ENCODE measurements at regions of chr11 and their contacts with region 1.

Region 1: GRCh38 chr11:101860696-101861427 is 53.9 kb upstream of the CEP126 start:
- DNase-seq: peak; percentile 36
- H3K4me3 ChIP-seq: no peak overlapping the region
- H3K27ac ChIP-seq: no peak overlapping the region
- H3K4me1 ChIP-seq: peaks cover 13% of the 10 kb centered on the region
- H3K27me3 ChIP-seq: no peaks in the 10 kb centered on the region
- CTCF ChIP-seq: peak; percentile 82 to 84

Region 2: GRCh38 chr11:101617735-101618332 is 243.0 kb before region 1 on chr11:
- CTCF ChIA-PET with region 1: interaction called, 27 read pairs
- dilution Hi-C with region 1: no loop called
- in situ Hi-C with region 1: no loop called
- intact Hi-C with region 1: no loop called
- DNase-seq: peak; percentile 85
- H3K4me3 ChIP-seq: no peak overlapping the region
- H3K27ac ChIP-seq: peak overlapping the region; percentile 92
- H3K4me1 ChIP-seq: peaks cover 22% of the 10 kb centered on the region
- H3K27me3 ChIP-seq: no peaks in the 10 kb centered on the region
- CTCF ChIP-seq: no peak

Region 3: GRCh38 chr11:101765945-101766344 is 94.9 kb before region 1 on chr11:
- CTCF ChIA-PET with region 1: no interaction called
- dilution Hi-C with region 1: no loop called
- in situ Hi-C with region 1: no loop called
- intact Hi-C with region 1: no loop called
- DNase-seq: no peak
- H3K4me3 ChIP-seq: no peak overlapping the region
- H3K27ac ChIP-seq: no peak overlapping the region
- H3K4me1 ChIP-seq: no peaks in the 10 kb centered on the region
- H3K27me3 ChIP-seq: no peaks in the 10 kb centered on the region
- CTCF ChIP-seq: no peak

Region 4: GRCh38 chr11:101848262-101848661 is 12.6 kb before region 1 on chr11:
- CTCF ChIA-PET with region 1: no interaction called
- dilution Hi-C with region 1: no loop called
- in situ Hi-C with region 1: no loop called
- intact Hi-C with region 1: no loop called
- DNase-seq: no peak
- H3K4me3 ChIP-seq: no peak overlapping the region
- H3K27ac ChIP-seq: no peak overlapping the region
- H3K4me1 ChIP-seq: no peaks in the 10 kb centered on the region
- H3K27me3 ChIP-seq: no peaks in the 10 kb centered on the region
- CTCF ChIP-seq: peak; percentile 13 to 32

Region 5: GRCh38 chr11:101880222-101880621 is 19.4 kb after region 1 on chr11:
- CTCF ChIA-PET with region 1: interaction called, 11 read pairs
- dilution Hi-C with region 1: no loop called
- in situ Hi-C with region 1: no loop called
- intact Hi-C with region 1: loop called (anchors 1 kb)
- DNase-seq: peak; percentile 33
- H3K4me3 ChIP-seq: no peak overlapping the region
- H3K27ac ChIP-seq: no peak overlapping the region
- H3K4me1 ChIP-seq: no peaks in the 10 kb centered on the region
- H3K27me3 ChIP-seq: no peaks in the 10 kb centered on the region
- CTCF ChIP-seq: peak; percentile 53 to 61

Region 6: GRCh38 chr11:101914738-101915426 is 54.0 kb after region 1 on chr11 and contains the start of gene CEP126:
- CTCF ChIA-PET with region 1: interaction called, 5 read pairs
- dilution Hi-C with region 1: no loop called
- in situ Hi-C with region 1: no loop called
- intact Hi-C with region 1: loop called (anchors 5 kb)
- DNase-seq: peak; percentile 92
- H3K4me3 ChIP-seq: peak within 1 kb of the TSS; percentile 75 to 84 (median 82)
- H3K27ac ChIP-seq: peak within 1 kb of the TSS; percentile 93
- H3K4me1 ChIP-seq: peaks cover 12% of the 10 kb centered on the region
- H3K27me3 ChIP-seq: no peaks in the 10 kb centered on the region
- CTCF ChIP-seq: peak; percentile 20 to 59
- total RNA-seq, gene CEP126: 2.2 to 2.8 TPM

Region 7: GRCh38 chr11:102268329-102269193 is 407.7 kb after region 1 on chr11:
- CTCF ChIA-PET with region 1: no interaction called
- dilution Hi-C with region 1: no loop called
- in situ Hi-C with region 1: no loop called
- intact Hi-C with region 1: loop called (anchors 2 kb)
- DNase-seq: peak; percentile 95
- H3K4me3 ChIP-seq: peak overlapping the region; percentile 32 to 56 (median 51)
- H3K27ac ChIP-seq: peak overlapping the region; percentile 90
- H3K4me1 ChIP-seq: peaks cover 36% of the 10 kb centered on the region
- H3K27me3 ChIP-seq: no peaks in the 10 kb centered on the region
- CTCF ChIP-seq: peak; percentile 66 to 78

Region 8: DNA sequence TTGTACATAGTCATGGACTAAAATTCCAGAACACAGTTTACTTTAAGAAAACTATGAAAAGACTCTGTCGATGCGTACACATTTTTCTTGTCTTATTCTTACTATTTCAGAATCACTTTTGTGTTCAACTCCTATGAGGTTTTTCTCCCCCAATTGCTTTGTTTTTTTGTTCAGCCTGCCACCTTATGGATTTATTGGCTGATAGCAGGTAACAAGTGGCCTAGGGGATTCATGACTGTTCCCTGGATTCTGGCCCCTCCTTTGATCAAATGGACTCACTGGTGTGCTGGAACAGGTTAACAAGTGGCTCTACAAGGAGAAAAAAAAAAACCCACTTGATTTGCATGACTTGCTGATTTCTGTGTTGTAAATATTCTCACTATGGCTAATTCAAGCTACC is 753.6 kb after region 1 on chr11:
- CTCF ChIA-PET with region 1: no interaction called
- dilution Hi-C with region 1: no loop called
- in situ Hi-C with region 1: no loop called
- intact Hi-C with region 1: loop called (anchors 2 kb)
- DNase-seq: no peak
- H3K4me3 ChIP-seq: no peak overlapping the region
- H3K27ac ChIP-seq: no peak overlapping the region
- H3K4me1 ChIP-seq: no peaks in the 10 kb centered on the region
- H3K27me3 ChIP-seq: no peaks in the 10 kb centered on the region
- CTCF ChIP-seq: peak; percentile 5 to 34

Region 9: DNA sequence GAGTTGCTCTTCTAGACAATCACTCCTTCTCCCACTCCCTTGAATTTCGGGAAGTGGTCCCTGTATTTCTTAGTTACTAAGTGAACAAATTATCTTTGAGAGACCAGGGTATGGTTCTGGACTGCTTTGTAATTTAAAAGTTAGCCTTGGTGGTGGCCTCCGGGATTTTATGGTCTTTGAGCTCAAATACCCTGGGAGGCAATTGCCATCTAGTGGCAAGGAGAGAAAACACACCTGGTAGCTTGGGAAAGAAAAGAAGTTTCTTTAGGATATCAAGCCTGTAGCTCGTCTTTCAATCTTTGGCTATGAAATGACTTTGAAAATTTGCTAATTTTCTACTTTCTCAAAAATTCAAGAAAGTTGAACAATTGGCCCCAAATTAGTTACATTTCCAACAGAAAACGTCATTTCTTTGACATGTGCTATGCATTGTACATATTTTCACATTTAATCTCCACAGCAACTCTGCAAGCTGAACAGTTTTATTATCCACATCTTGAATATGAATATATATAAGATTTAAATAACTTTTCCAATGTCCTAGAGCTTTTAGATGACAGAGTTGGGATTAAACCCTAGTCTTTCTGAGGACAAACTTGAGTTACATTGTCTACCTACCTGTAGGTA is 805.6 kb after region 1 on chr11:
- CTCF ChIA-PET with region 1: no interaction called
- dilution Hi-C with region 1: no loop called
- in situ Hi-C with region 1: no loop called
- intact Hi-C with region 1: loop called (anchors 2 kb)
- DNase-seq: peak; percentile 37
- H3K4me3 ChIP-seq: no peak overlapping the region
- H3K27ac ChIP-seq: no peak overlapping the region
- H3K4me1 ChIP-seq: no peaks in the 10 kb centered on the region
- H3K27me3 ChIP-seq: no peaks in the 10 kb centered on the region
- CTCF ChIP-seq: peak; percentile 89 to 92